Heart left ventricle (tissue), 16 donors: ENCODE measurements at regions of chr5 and their contacts with region 1.

Region 1: DNA sequence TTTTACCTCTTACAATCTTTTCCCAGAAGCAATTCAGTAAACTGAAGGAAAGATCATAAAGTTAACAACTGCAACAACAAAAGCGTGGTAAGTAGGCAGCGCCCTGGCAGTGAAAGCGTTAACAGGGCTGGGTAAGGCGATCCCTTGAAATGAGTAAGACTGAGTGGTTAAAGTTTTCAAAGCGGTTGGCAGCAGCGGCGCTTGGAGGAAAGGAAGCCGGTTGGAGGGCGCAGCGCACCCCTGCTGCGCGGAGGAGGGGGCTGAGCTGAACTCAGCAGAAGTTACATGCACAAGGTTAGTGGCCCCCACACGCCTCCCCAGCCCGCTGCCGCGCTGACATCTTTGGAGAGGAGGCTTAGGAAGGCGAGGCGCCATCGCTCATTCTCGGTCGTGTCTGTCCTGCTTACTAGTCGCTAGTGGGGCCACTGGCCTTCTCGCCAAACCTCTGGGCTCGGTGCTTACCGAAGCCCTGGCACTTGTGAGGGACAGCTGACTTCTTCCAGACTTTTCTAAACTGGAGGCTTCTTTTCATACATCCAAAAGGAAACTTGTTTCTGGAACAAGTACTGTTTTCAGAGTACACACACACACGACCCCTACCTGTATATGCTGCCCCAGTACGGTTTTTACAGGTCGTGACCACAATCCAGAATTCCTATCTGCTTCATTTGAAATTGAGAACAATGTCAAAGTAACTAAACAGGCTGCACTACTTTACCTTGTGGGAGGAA is at the start of gene SH3RF2:
- DNase-seq: peak; percentile 12 to 67 (median 33)
- ATAC-seq: peak; percentile 67 to 89 (median 87)
- H3K4me3 ChIP-seq: peak within 1 kb of the TSS; percentile 10 to 62 (median 52)
- H3K27ac ChIP-seq: peak within 1 kb of the TSS in 10 of 12 donors; percentile 10 to 64 (median 38)
- H3K4me1 ChIP-seq: peaks cover 0 to 23% (median 13%) of the 10 kb centered on the region in 12 donors
- H3K27me3 ChIP-seq: peaks cover 0 to 13% (median 0%) of the 10 kb centered on the region in 9 donors
- CTCF ChIP-seq: no peak
- POLR2A ChIP-seq: no peak
- total RNA-seq, gene SH3RF2: 83.2 to 495 (median 180) TPM

Region 2: GRCh38 chr5:145981589-145982491 is 45.3 kb after region 1 on chr5:
- intact Hi-C with region 1: loop called in 2 of 10 experiments (anchors 5 kb)
- DNase-seq: no peak
- ATAC-seq: no peak
- H3K4me3 ChIP-seq: no peak overlapping the region
- H3K27ac ChIP-seq: no peak overlapping the region
- H3K4me1 ChIP-seq: peaks cover 0 to 49% (median 18%) of the 10 kb centered on the region in 12 donors
- H3K27me3 ChIP-seq: no peaks in the 10 kb centered on the region
- CTCF ChIP-seq: no peak
- POLR2A ChIP-seq: no peak